Adrenal gland (tissue), 19 donors: ENCODE measurements at regions of chr6 and their contacts with region 1.

Region 1: GRCh38 chr6:133916650-133917151 is 27.8 kb downstream of the TCF21 start:
- DNase-seq: peak; percentile 73 to 94 (median 88)
- H3K4me3 ChIP-seq: no peak overlapping the region
- H3K27ac ChIP-seq: no peak overlapping the region
- H3K4me1 ChIP-seq: no peaks in the 10 kb centered on the region
- H3K27me3 ChIP-seq: no peaks in the 10 kb centered on the region
- CTCF ChIP-seq: peak; percentile 66 to 88 (median 78)
- POLR2A ChIP-seq: no peak

Region 2: GRCh38 chr6:133568970-133569889 is 347.5 kb before region 1 on chr6:
- intact Hi-C with region 1: loop called (anchors 5 to 10 kb)
- DNase-seq: peak in 4 of 7 donors; percentile 17 to 35 (median 27)
- H3K4me3 ChIP-seq: peak overlapping the region in 1 of 4 donors; percentile 38
- H3K27ac ChIP-seq: no peak overlapping the region
- H3K4me1 ChIP-seq: peaks cover 0 to 8% of the 10 kb centered on the region in 2 donors
- H3K27me3 ChIP-seq: peaks cover 8% of the 10 kb centered on the region
- CTCF ChIP-seq: peak; percentile 77 to 88 (median 83)
- POLR2A ChIP-seq: no peak